Dendritic cell treated with granulocyte-macrophage colony-stimulating factor and Interleukin-4, amounts not matched to agents 40 ng/mL and 50 ng/mL, for 4 days (primary cell): ENCODE measurements at regions of chrX and their contacts with region 1.

Region 1: GRCh38 chrX:123833387-123833786 is 26.5 kb upstream of the XIAP start:
- H3K4me3 Mint-ChIP-seq: no peak overlapping the region
- H3K27ac Mint-ChIP-seq: no peak overlapping the region
- H3K4me1 Mint-ChIP-seq: peaks cover 14% of the 10 kb centered on the region
- H3K27me3 Mint-ChIP-seq: peaks cover 2% of the 10 kb centered on the region

Region 2: DNA sequence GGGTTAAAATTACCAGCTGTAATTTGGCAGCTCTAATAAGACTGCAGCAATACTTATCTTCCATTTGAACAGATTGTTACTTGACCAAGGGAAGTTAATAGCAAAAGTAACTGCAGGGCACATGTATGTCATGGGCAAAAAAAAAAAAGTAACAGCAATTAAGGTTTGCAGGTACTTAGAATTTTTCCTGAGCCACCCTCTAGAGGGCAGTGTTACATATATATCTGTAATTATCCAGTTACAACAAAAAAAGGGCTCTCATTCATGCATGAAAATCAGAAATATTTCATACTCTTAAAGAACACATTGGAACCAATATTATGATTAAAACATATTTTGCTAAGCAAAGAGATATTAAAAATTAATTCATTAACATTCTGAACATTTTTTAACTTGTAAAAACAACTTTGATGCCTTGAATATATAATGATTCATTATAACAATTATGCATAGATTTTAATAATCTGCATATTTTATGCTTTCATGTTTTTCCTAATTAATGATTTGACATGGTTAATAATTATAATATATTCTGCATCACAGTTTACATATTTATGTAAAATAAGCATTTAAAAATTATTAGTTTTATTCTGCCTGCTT is 51.5 kb after region 1 on chrX:
- intact Hi-C with region 1: loop called (anchors 2 kb)
- H3K4me3 Mint-ChIP-seq: no peak overlapping the region
- H3K27ac Mint-ChIP-seq: no peak overlapping the region
- H3K4me1 Mint-ChIP-seq: peaks cover 9% of the 10 kb centered on the region
- H3K27me3 Mint-ChIP-seq: no peaks in the 10 kb centered on the region